ENCODE measurements at regions of chr1 and their contacts with region 1.

Region 1: DNA sequence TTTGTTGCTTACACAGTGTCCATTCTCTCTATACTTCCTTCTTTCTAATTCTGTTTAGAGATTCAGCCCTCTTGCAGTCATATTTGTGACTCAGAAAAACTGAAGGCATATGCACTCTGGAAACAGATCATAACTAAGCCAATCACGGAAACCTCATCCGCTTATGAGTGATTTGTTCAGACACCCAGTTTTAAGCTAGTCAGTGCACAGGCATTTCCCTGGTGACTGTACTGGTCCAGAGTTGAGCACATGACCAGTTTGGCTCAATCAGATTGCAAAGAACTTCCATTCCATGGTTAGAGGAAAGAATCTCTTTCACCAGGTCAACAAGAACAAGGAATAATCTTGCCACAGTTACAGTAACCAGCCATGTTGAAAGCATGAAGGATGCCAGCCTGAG is 69.2 kb upstream of the SGIP1 start:
- DNase-seq: no peak

Region 2: GRCh38 chr1:65948609-65949229 is 516.1 kb before region 1 on chr1:
- in situ Hi-C with region 1: loop called (anchors 25 kb)
- DNase-seq: no peak

Region 3: GRCh38 chr1:66598670-66599069 is 133.9 kb after region 1 on chr1:
- in situ Hi-C with region 1: no loop called
- DNase-seq: no peak

Measured in KBM-7 (cell line).